Activated CD4-positive, alpha-beta T cell treated with anti-CD3 and anti-CD28 coated beads for 36 hours (primary cell): ENCODE measurements at regions of chr4 and their contacts with region 1.

Region 1: DNA sequence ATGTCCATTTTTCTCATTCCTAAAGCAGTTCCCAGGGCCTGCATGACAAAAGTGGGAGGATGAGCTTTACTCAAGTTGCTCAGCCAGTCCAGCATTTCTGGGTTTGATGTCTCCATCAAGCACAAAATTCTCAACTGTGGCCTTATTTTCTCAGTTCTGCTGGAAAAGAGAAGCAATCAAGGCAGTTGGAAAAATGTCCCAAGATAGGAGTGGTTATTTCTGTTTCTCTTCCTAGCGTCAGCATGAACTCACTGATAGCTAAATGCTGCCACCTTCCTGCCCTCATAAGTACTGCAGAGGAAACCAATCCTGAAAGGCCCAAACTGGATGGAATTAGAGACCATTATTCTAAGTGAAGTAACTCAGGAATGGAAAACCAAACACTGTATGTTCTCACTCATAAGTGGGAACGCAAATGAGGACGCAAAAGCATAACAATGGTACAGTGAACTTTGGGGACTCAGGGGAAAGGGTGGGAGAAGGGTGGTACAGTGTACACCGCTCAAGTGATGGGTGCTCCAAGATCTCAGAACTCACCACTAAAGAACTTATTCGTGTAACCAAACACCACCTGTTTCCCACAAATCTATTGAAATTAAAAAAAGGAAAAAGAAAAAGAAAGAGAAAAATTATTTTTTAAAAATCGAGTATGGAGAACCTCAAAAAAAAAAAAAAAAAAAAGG is 29.6 kb downstream of the ADH7 start:
- DNase-seq: peak; percentile 72
- ATAC-seq: peak; percentile 50
- H3K4me3 Mint-ChIP-seq: no peak overlapping the region
- H3K27ac Mint-ChIP-seq: no peak overlapping the region
- H3K4me1 Mint-ChIP-seq: peaks cover 7% of the 10 kb centered on the region
- H3K27me3 Mint-ChIP-seq: peaks cover 1% of the 10 kb centered on the region

Region 2: GRCh38 chr4:98150092-98150761 is 1255.3 kb before region 1 on chr4:
- CTCF ChIA-PET with region 1: interaction called, 3 read pairs
- POLR2A ChIA-PET with region 1: no interaction called
- intact Hi-C with region 1: loop called in 1 of 2 experiments (anchors 2 kb)
- DNase-seq: no peak
- ATAC-seq: no peak
- H3K4me3 Mint-ChIP-seq: no peak overlapping the region
- H3K27ac Mint-ChIP-seq: no peak overlapping the region
- H3K4me1 Mint-ChIP-seq: peaks cover 6% of the 10 kb centered on the region
- H3K27me3 Mint-ChIP-seq: peaks cover 2% of the 10 kb centered on the region

Region 3: GRCh38 chr4:98682719-98683118 is 722.9 kb before region 1 on chr4:
- CTCF ChIA-PET with region 1: no interaction called
- POLR2A ChIA-PET with region 1: no interaction called
- intact Hi-C with region 1: loop called in 1 of 2 experiments (anchors 5 kb)
- DNase-seq: no peak
- ATAC-seq: no peak
- H3K4me3 Mint-ChIP-seq: no peak overlapping the region
- H3K27ac Mint-ChIP-seq: no peak overlapping the region
- H3K4me1 Mint-ChIP-seq: peaks cover 18% of the 10 kb centered on the region
- H3K27me3 Mint-ChIP-seq: no peaks in the 10 kb centered on the region

Region 4: GRCh38 chr4:98939892-98940298 is 465.7 kb before region 1 on chr4:
- CTCF ChIA-PET with region 1: no interaction called
- POLR2A ChIA-PET with region 1: no interaction called
- intact Hi-C with region 1: loop called in 1 of 2 experiments (anchors 5 kb)
- DNase-seq: no peak
- ATAC-seq: peak; percentile 31
- H3K4me3 Mint-ChIP-seq: no peak overlapping the region
- H3K27ac Mint-ChIP-seq: no peak overlapping the region
- H3K4me1 Mint-ChIP-seq: peaks cover 24% of the 10 kb centered on the region
- H3K27me3 Mint-ChIP-seq: no peaks in the 10 kb centered on the region

Region 5: DNA sequence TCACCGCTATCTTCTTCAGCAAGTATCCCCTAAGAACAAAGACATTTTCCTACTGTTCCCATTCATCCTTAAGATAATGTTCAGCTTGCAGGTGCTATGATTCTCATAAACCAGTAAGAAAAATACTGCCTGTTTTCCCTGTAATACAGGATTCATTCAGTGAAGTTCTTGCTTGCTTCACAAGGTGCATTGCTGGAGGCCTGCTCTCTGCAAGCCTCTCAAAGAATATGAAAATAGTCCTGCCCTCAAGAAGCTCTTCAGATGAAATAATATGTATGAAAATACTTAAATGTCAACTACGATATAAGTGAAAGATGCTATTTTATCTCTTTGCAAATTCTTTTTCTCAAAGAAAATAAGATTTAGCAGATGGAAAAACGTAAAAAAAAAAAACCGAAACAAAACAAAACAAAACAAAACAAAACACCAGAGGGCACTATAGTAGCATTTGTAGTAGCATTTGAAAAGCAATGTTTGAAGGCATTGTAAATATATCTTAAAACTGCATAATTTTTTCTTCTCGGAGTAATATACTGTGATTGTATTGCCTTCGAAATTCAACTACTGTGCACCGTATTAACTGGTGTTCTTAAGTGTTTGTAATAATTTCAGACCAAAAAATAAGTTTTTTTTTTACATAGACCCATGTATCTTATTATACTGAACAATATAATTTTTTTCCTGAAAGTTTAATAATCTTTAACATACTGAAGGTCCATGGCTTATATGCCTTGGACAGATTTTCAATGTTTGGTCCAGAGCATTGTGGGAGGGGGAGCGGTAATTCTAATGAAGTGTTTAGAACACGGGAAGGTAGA is 287.5 kb before region 1 on chr4:
- CTCF ChIA-PET with region 1: interaction called, 3 read pairs
- POLR2A ChIA-PET with region 1: no interaction called
- intact Hi-C with region 1: loop called (anchors 1 kb)
- DNase-seq: no peak
- ATAC-seq: no peak
- H3K4me3 Mint-ChIP-seq: no peak overlapping the region
- H3K27ac Mint-ChIP-seq: no peak overlapping the region
- H3K4me1 Mint-ChIP-seq: no peaks in the 10 kb centered on the region
- H3K27me3 Mint-ChIP-seq: no peaks in the 10 kb centered on the region

Region 6: GRCh38 chr4:99462875-99463464 is 57.4 kb after region 1 on chr4:
- CTCF ChIA-PET with region 1: interaction called, 18 read pairs
- POLR2A ChIA-PET with region 1: no interaction called
- intact Hi-C with region 1: loop called in 1 of 2 experiments (anchors 2 kb)
- DNase-seq: peak; percentile 70
- ATAC-seq: peak; percentile 84
- H3K4me3 Mint-ChIP-seq: no peak overlapping the region
- H3K27ac Mint-ChIP-seq: no peak overlapping the region
- H3K4me1 Mint-ChIP-seq: no peaks in the 10 kb centered on the region
- H3K27me3 Mint-ChIP-seq: no peaks in the 10 kb centered on the region